B cell (primary cell): ENCODE measurements at regions of chr6 and their contacts with region 1.

Region 1: DNA sequence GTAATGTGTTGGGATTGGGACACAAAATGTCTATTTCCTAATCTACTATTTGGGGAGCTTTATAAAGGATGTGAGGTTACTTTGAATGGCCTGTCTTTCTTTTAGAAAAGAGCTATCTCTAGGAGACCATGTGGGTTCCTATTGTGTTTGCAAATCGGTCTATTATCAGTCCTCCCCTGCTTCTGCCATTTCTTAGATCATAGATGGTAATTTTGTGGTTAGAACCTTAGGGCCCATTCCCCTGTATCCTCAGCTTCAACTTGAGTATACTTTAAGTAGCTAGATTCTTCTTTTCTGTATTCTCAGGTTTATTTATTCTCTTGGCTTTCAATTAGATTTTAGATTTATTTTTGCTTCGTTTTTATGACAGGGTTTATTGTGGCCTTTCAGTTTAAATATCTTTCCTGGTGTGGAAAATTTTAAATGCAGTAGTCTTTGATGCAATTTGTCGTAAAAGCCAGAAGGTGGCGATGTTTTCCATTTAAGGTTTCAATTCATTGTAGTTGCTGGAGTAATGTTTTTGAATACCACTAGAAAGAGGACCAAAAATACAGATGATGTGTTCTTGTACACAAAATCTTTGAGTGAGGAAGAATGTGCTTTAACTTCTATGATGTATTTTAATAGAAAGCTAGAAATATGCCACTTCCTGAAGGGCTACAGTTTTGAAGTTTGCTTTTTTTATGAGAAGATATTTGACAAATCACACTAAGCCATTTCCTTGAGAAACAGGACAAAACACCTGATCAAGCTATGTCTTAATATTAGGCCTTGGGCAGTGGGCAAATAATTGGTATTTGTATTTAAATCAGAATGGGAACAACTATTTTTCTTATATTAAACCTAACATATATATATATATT is 20.3 kb downstream of the TBPL1 start:
- DNase-seq: peak; percentile 63
- ATAC-seq: peak; percentile 43
- H3K4me3 ChIP-seq: no peak overlapping the region
- H3K4me3 Mint-ChIP-seq: no peak overlapping the region
- H3K27ac ChIP-seq: no peak overlapping the region
- H3K27ac Mint-ChIP-seq: no peak overlapping the region
- H3K4me1 ChIP-seq: no peaks in the 10 kb centered on the region
- H3K4me1 Mint-ChIP-seq: peaks cover 27% of the 10 kb centered on the region
- H3K27me3 ChIP-seq: no peaks in the 10 kb centered on the region
- H3K27me3 Mint-ChIP-seq: no peaks in the 10 kb centered on the region
- CTCF ChIP-seq: peak; percentile 86

Region 2: GRCh38 chr6:133945158-133945557 is 28.2 kb before region 1 on chr6:
- CTCF ChIA-PET with region 1: interaction called, 10 read pairs
- POLR2A ChIA-PET with region 1: no interaction called
- intact Hi-C with region 1: no loop called
- DNase-seq: no peak
- ATAC-seq: no peak
- H3K4me3 ChIP-seq: no peak overlapping the region
- H3K4me3 Mint-ChIP-seq: no peak overlapping the region
- H3K27ac ChIP-seq: no peak overlapping the region
- H3K27ac Mint-ChIP-seq: no peak overlapping the region
- H3K4me1 ChIP-seq: no peaks in the 10 kb centered on the region
- H3K4me1 Mint-ChIP-seq: no peaks in the 10 kb centered on the region
- H3K27me3 ChIP-seq: peaks cover 0 to 9% (median 1%) of the 10 kb centered on the region in 4 experiments
- H3K27me3 Mint-ChIP-seq: peaks cover 14% of the 10 kb centered on the region
- CTCF ChIP-seq: no peak

Region 3: GRCh38 chr6:134145786-134146185 is 172.4 kb after region 1 on chr6:
- CTCF ChIA-PET with region 1: no interaction called
- POLR2A ChIA-PET with region 1: no interaction called
- intact Hi-C with region 1: no loop called
- DNase-seq: peak; percentile 29
- ATAC-seq: peak; percentile 51
- H3K4me3 ChIP-seq: no peak overlapping the region
- H3K4me3 Mint-ChIP-seq: no peak overlapping the region
- H3K27ac ChIP-seq: no peak overlapping the region
- H3K27ac Mint-ChIP-seq: no peak overlapping the region
- H3K4me1 ChIP-seq: no peaks in the 10 kb centered on the region
- H3K4me1 Mint-ChIP-seq: peaks cover 2% of the 10 kb centered on the region
- H3K27me3 ChIP-seq: no peaks in the 10 kb centered on the region
- H3K27me3 Mint-ChIP-seq: no peaks in the 10 kb centered on the region
- CTCF ChIP-seq: no peak